Sigmoid colon (tissue), 7 donors: ENCODE measurements at regions of chr2 and their contacts with region 1.

Region 1: GRCh38 chr2:71798266-71799012 is 345.1 kb downstream of the DYSF start:
- DNase-seq: peak; percentile 57
- H3K4me3 ChIP-seq: no peak overlapping the region
- H3K27ac ChIP-seq: no peak overlapping the region
- H3K4me1 ChIP-seq: peaks cover 0 to 3% (median 0%) of the 10 kb centered on the region in 4 donors
- H3K27me3 ChIP-seq: no peaks in the 10 kb centered on the region
- CTCF ChIP-seq: peak in 3 of 4 experiments; percentile 40 to 63 (median 45)
- EP300 ChIP-seq: no peak
- POLR2A ChIP-seq: no peak

Region 2: DNA sequence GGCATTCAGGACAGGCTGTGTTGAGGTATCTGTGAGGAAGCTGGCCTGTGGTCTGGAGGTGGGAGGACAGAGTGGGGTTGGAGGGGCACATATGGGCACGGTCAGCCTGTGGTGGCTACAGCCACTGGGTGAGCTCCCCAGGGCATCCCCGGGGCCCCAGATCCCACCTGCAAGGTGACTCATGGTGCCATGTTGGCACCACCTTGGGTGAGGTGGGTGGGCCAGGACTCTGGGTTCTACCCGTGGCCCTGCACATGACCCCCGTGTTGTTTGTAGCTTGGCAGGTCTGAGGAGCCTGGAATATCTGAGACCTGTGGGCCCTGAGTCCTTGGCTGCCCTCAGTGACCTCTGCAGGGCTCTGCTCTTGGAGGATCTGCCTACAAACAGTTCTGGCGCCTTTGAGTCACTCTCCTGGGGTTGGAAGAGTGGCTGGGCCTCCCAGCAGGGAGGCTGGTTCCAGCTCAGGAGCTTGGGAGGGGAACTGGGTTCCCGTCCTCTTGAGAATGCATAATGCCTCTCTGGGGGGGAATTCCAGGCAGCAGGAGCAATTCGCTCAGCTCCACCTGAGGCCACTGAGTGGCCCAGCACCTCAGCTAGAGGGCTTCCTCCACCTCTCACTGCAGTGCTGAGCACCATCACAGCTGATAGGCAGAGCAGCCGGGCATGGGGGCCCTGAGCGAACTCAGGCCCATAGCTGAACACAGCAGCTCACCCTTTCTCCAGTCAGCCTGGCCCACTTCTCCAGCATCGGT is 240.0 kb before region 1 on chr2:
- intact Hi-C with region 1: loop called (anchors 10 kb)
- DNase-seq: no peak
- H3K4me3 ChIP-seq: no peak overlapping the region
- H3K27ac ChIP-seq: no peak overlapping the region
- H3K4me1 ChIP-seq: peaks cover 0 to 9% (median 4%) of the 10 kb centered on the region in 4 donors
- H3K27me3 ChIP-seq: no peaks in the 10 kb centered on the region
- CTCF ChIP-seq: no peak
- EP300 ChIP-seq: no peak
- POLR2A ChIP-seq: no peak

Region 3: GRCh38 chr2:71609958-71610357 is 188.5 kb before region 1 on chr2:
- intact Hi-C with region 1: loop called (anchors 5 kb)
- DNase-seq: peak; percentile 32
- H3K4me3 ChIP-seq: no peak overlapping the region
- H3K27ac ChIP-seq: no peak overlapping the region
- H3K4me1 ChIP-seq: peaks cover 0 to 13% (median 13%) of the 10 kb centered on the region in 4 donors
- H3K27me3 ChIP-seq: no peaks in the 10 kb centered on the region
- CTCF ChIP-seq: peak in 2 of 4 experiments; percentile 18 to 22
- EP300 ChIP-seq: no peak
- POLR2A ChIP-seq: no peak